AG04449 (cell line): ENCODE measurements at regions of chr14 and their contacts with region 1.

Region 1: GRCh38 chr14:68939893-68940613 is 39.0 kb downstream of the ACTN1 start:
- DNase-seq: peak; percentile 94
- H3K4me3 ChIP-seq: no peak overlapping the region
- CTCF ChIP-seq: no peak

Region 2: GRCh38 chr14:68926236-68926635 is 13.8 kb before region 1 on chr14:
- CTCF ChIA-PET with region 1: interaction called, 17 read pairs
- POLR2A ChIA-PET with region 1: interaction called, 5 read pairs
- DNase-seq: no peak
- H3K4me3 ChIP-seq: no peak overlapping the region
- CTCF ChIP-seq: peak; percentile 51

Region 3: DNA sequence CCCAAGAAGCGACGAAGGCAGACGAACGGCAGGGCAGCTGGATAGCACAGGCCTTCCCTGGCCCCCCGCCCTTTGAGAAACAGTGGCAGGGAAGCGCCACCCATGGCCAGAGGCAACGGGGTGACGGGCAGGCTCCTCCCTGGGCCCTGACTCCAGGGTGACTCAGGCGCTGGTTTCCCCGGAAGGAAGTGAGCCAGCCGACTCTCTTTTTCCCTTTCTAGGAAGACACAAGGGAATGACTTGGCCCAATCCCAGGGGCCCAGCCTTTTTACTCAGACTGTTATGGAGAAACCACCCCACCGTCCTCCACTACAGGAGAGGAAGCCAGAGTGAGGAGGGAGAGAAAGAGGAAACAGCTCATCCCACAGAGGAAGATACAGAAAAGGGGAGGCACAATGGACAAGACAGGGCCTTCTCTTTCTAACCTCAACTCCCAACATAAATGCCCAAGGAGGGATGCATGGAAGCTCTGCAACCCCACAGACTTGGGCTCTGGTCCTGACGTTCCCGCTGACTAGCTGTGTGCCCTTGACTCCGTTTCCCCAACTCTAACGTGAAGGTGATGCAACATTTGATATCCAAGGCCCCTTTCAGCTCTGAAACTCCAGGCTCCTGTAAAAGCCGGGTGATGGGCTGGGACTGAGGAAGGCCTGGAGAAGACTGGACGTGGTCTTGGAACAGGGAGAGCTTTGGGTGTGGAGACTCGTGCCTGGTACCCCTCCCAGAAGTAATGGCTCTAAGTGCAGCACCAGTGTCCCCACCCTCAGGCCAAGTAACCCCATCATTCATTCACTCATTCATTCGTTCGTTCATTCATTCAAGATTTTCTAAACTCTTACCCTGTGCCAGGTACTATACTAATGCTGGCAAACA is 11.2 kb after region 1 on chr14:
- CTCF ChIA-PET with region 1: interaction called, 7 read pairs
- POLR2A ChIA-PET with region 1: interaction called, 12 read pairs
- DNase-seq: no peak
- H3K4me3 ChIP-seq: no peak overlapping the region
- CTCF ChIP-seq: no peak

Region 4: GRCh38 chr14:68977718-68978171 is 37.7 kb after region 1 on chr14:
- CTCF ChIA-PET with region 1: interaction called, 5 read pairs
- POLR2A ChIA-PET with region 1: interaction called, 32 read pairs
- DNase-seq: peak; percentile 89
- H3K4me3 ChIP-seq: peak overlapping the region; percentile 98
- CTCF ChIP-seq: peak; percentile 40

Region 5: DNA sequence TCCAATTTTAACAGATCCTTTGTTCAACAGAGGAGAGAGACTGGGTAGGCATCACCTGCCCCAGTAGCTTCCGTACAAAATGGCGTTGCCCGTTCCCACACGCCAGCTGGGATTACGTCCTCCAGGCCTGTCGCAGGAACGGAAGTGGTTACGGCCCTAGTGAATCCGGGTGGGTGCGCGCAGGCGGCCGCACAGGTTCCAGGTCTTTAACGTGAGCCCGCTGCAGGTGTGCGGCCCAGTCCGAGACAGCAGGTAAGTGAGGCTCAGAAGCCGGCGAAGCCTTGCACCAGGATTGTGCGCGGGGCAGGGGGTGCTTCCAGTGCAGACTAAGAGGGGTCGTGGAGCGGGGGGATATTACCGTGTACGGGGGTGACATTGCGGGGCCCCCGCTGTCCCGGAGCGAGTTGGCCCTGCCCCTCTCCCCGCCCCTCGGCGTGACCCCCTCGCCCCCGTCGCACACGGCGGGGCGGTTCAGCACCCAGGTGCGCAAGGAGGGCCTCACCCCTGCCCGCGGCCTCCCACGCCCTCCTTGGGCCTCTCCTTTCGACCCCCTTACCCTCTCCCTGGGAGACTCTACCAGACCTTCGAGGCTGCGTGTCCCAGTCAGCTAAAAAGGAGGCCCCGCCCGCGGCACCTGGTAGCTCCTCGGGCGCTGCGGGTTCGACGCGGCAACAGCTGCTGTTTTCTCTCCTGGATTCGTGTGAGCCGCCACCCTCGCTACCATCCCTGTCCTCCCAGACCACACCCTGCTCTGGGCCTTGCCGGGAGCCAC is 251.5 kb after region 1 on chr14 and contains the start of gene EXD2:
- CTCF ChIA-PET with region 1: no interaction called
- POLR2A ChIA-PET with region 1: no interaction called
- DNase-seq: peak; percentile 7
- H3K4me3 ChIP-seq: peak within 1 kb of the TSS; percentile 92
- CTCF ChIP-seq: no peak